ENCODE measurements at regions of chr2 and their contacts with region 1.

Region 1: GRCh38 chr2:23083966-23084365 is 301.0 kb upstream of the KLHL29 start:
- DNase-seq: no peak
- ATAC-seq: no peak
- H3K4me3 ChIP-seq: no peak overlapping the region
- H3K27ac ChIP-seq: no peak overlapping the region
- H3K4me1 ChIP-seq: no peaks in the 10 kb centered on the region
- H3K27me3 ChIP-seq: no peaks in the 10 kb centered on the region
- CTCF ChIP-seq: no peak
- EP300 ChIP-seq: no peak
- POLR2A ChIP-seq: no peak
- RAD21 ChIP-seq: no peak

Region 2: GRCh38 chr2:21754164-21754788 is 1329.7 kb before region 1 on chr2:
- CTCF ChIA-PET with region 1: no interaction called
- POLR2A ChIA-PET with region 1: no interaction called
- in situ Hi-C with region 1: no loop called
- intact Hi-C with region 1: loop called (anchors 5 kb)
- DNase-seq: peak; percentile 10
- ATAC-seq: peak; percentile 71
- H3K4me3 ChIP-seq: no peak overlapping the region
- H3K27ac ChIP-seq: no peak overlapping the region
- H3K4me1 ChIP-seq: no peaks in the 10 kb centered on the region
- H3K27me3 ChIP-seq: no peaks in the 10 kb centered on the region
- CTCF ChIP-seq: peak; percentile 53
- EP300 ChIP-seq: no peak
- POLR2A ChIP-seq: no peak
- RAD21 ChIP-seq: no peak

Region 3: DNA sequence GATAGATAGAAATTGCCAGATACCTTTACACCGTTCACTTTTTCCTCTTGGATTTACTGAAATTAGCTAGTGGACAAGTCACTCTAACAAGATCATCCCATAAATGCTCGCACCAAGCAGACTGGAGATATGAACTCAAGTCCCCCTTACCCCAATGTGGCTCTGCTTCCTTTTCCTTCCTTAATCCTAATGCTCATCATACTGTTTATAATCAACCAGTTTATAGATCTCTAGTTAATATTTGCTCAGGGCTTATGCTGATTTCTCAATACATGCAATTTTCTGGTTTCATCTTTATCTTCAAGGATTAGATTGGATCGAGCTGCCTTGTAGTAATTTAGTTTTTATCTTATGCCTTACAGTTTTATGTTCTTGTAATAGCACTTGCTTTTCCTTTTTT is 17.3 kb before region 1 on chr2:
- CTCF ChIA-PET with region 1: no interaction called
- POLR2A ChIA-PET with region 1: no interaction called
- in situ Hi-C with region 1: no loop called
- intact Hi-C with region 1: loop called (anchors 1 kb)
- DNase-seq: no peak
- ATAC-seq: no peak
- H3K4me3 ChIP-seq: no peak overlapping the region
- H3K27ac ChIP-seq: no peak overlapping the region
- H3K4me1 ChIP-seq: peaks cover 8% of the 10 kb centered on the region
- H3K27me3 ChIP-seq: no peaks in the 10 kb centered on the region
- CTCF ChIP-seq: no peak
- EP300 ChIP-seq: no peak
- POLR2A ChIP-seq: no peak
- RAD21 ChIP-seq: no peak

Measured in HepG2 (cell line).